Astrocyte of the spinal cord (primary cell): ENCODE measurements at regions of chr1 and their contacts with region 1.

Region 1: GRCh38 chr1:8015036-8015808 is 10.9 kb downstream of the ERRFI1 start:
- DNase-seq: peak; percentile 85
- H3K4me3 ChIP-seq: no peak overlapping the region
- CTCF ChIP-seq: peak; percentile 54

Region 2: GRCh38 chr1:8314346-8315280 is 299.4 kb after region 1 on chr1:
- in situ Hi-C with region 1: loop called (anchors 25 kb)
- DNase-seq: peak; percentile 79
- H3K4me3 ChIP-seq: no peak overlapping the region
- CTCF ChIP-seq: peak; percentile 94